ENCODE measurements at regions of chr14 and their contacts with region 1.

Region 1: GRCh38 chr14:39102969-39103957 is at the start of gene SEC23A:
- DNase-seq: no peak
- ATAC-seq: peak; percentile 97
- H3K4me3 ChIP-seq: peak within 1 kb of the TSS; percentile 84
- H3K27ac ChIP-seq: peak within 1 kb of the TSS; percentile 73
- H3K4me1 ChIP-seq: peaks cover 6% of the 10 kb centered on the region; the same call in 1 of the 2 replicates
- H3K27me3 ChIP-seq: no peaks in the 10 kb centered on the region
- CTCF ChIP-seq: no peak
- EP300 ChIP-seq: no peak
- POLR2A ChIP-seq: peak; percentile 98
- RAD21 ChIP-seq: no peak
- polyA plus RNA-seq, gene SEC23A: 13.6 to 15.2 TPM

Region 2: GRCh38 chr14:39114073-39114838 is 11.0 kb after region 1 on chr14 and contains the start of gene GEMIN2:
- CTCF ChIA-PET with region 1: interaction called, 13 read pairs
- POLR2A ChIA-PET with region 1: interaction called, 22 read pairs
- RAD21 ChIA-PET with region 1: interaction called, 28 read pairs
- SMC1A ChIA-PET with region 1: interaction called, 39 read pairs
- in situ Hi-C with region 1: no loop called
- intact Hi-C with region 1: loop called (anchors 1 kb)
- DNase-seq: peak; percentile 89
- ATAC-seq: peak; percentile 94
- H3K4me3 ChIP-seq: peak within 1 kb of the TSS; percentile 73
- H3K27ac ChIP-seq: peak within 1 kb of the TSS; percentile 64
- H3K4me1 ChIP-seq: peaks cover 15% of the 10 kb centered on the region
- H3K27me3 ChIP-seq: no peaks in the 10 kb centered on the region
- CTCF ChIP-seq: no peak
- EP300 ChIP-seq: no peak
- POLR2A ChIP-seq: peak; percentile 91
- RAD21 ChIP-seq: no peak
- polyA plus RNA-seq, gene GEMIN2: 51.5 to 69.3 TPM

Region 3: GRCh38 chr14:39174560-39175444 is 71.5 kb after region 1 on chr14 and contains the start of gene PNN:
- CTCF ChIA-PET with region 1: interaction called, 3 read pairs
- POLR2A ChIA-PET with region 1: interaction called, 9 read pairs
- RAD21 ChIA-PET with region 1: interaction called, 5 read pairs
- SMC1A ChIA-PET with region 1: interaction called, 3 read pairs
- in situ Hi-C with region 1: loop called (anchors 5 kb)
- intact Hi-C with region 1: no loop called
- DNase-seq: peak; percentile 99
- ATAC-seq: peak; percentile 93
- H3K4me3 ChIP-seq: peak within 1 kb of the TSS; percentile 90
- H3K27ac ChIP-seq: peak within 1 kb of the TSS; percentile 90
- H3K4me1 ChIP-seq: peaks cover 7% of the 10 kb centered on the region
- H3K27me3 ChIP-seq: no peaks in the 10 kb centered on the region
- CTCF ChIP-seq: no peak
- EP300 ChIP-seq: no peak; a peak in 1 of 4 replicates
- POLR2A ChIP-seq: peak; percentile 96
- RAD21 ChIP-seq: no peak
- polyA plus RNA-seq, gene PNN: 44.2 to 55.4 TPM

Region 4: DNA sequence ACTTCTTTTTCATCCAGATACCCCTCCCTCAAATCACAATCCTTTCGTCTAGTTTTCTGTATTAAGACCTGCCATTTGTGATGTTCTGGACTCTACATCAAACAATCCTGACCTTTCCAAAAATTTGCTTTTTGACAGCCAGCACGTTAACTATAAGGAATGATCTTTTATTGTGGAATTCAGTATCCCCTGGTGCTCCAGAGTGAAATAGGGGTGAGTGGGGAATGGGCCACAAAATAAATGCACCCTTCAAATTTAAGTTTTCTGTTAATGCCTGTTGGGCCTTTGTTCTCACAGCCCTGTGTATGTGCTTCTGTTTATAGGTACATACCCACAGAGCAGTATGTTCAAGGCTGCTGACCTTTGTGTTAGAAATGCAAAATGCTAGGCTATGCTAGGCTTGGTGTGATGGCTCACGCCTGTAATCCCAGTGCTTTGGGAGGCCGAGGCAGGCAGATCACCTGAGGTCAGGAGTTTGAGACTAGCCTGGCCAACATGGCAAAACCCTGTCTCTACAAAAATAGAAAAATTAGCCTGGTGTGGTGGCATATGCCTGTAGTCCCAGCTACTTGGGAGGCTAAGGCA is 83.8 kb after region 1 on chr14:
- CTCF ChIA-PET with region 1: no interaction called
- POLR2A ChIA-PET with region 1: no interaction called
- RAD21 ChIA-PET with region 1: no interaction called
- SMC1A ChIA-PET with region 1: no interaction called
- in situ Hi-C with region 1: no loop called
- intact Hi-C with region 1: no loop called
- DNase-seq: no peak
- ATAC-seq: peak; percentile 26
- H3K4me3 ChIP-seq: no peak overlapping the region
- H3K27ac ChIP-seq: no peak overlapping the region
- H3K4me1 ChIP-seq: no peaks in the 10 kb centered on the region
- H3K27me3 ChIP-seq: no peaks in the 10 kb centered on the region
- CTCF ChIP-seq: no peak
- EP300 ChIP-seq: no peak
- POLR2A ChIP-seq: no peak
- RAD21 ChIP-seq: no peak

Region 5: DNA sequence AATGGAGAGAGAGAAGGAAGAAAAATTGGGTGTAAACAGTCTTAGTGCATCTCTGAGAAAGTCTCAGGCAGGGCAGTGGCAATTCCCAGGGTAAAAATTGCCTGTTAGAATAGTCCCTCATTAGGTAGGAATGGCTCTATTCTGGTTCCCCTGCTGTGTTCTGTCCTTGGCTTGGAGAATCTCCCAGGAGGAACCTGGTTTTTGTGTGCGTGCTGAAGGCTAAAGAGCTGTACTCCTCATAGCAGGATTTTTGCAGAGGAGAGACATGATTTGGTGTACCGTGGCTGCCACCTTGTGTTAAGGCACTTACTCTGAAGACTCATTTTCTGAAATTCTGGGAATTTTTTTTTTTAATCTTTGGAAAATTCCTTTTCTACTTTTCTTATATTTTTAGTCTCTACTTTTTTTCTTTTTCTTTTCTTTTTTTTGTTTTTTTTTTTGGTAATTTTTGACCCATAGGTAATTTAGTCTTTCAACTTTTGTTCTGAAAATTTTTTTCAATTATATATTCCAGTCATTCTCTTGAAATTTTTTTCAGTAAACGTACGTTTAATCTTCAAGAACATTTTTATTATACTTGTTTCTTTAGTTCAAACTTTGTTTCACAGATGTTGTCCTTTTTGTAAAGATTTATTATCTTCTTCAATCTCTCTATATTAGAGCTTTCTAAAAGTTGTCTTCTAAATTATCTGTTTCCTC is 265.1 kb after region 1 on chr14:
- CTCF ChIA-PET with region 1: interaction called, 5 read pairs
- POLR2A ChIA-PET with region 1: no interaction called
- RAD21 ChIA-PET with region 1: no interaction called
- SMC1A ChIA-PET with region 1: interaction called, 3 read pairs
- in situ Hi-C with region 1: no loop called
- intact Hi-C with region 1: loop called (anchors 1 kb)
- DNase-seq: no peak
- ATAC-seq: peak; percentile 46; the same call in 2 of the 3 replicates
- H3K4me3 ChIP-seq: no peak overlapping the region
- H3K27ac ChIP-seq: no peak overlapping the region
- H3K4me1 ChIP-seq: no peaks in the 10 kb centered on the region
- H3K27me3 ChIP-seq: no peaks in the 10 kb centered on the region
- CTCF ChIP-seq: peak; percentile 31 to 61 (median 37); a peak in 5 of 6 replicates
- EP300 ChIP-seq: no peak
- POLR2A ChIP-seq: no peak
- RAD21 ChIP-seq: peak; percentile 84

Measured in GM12878 (cell line).